MCF 10A (cell line): ENCODE measurements at regions of chr13 and their contacts with region 1.

Region 1: DNA sequence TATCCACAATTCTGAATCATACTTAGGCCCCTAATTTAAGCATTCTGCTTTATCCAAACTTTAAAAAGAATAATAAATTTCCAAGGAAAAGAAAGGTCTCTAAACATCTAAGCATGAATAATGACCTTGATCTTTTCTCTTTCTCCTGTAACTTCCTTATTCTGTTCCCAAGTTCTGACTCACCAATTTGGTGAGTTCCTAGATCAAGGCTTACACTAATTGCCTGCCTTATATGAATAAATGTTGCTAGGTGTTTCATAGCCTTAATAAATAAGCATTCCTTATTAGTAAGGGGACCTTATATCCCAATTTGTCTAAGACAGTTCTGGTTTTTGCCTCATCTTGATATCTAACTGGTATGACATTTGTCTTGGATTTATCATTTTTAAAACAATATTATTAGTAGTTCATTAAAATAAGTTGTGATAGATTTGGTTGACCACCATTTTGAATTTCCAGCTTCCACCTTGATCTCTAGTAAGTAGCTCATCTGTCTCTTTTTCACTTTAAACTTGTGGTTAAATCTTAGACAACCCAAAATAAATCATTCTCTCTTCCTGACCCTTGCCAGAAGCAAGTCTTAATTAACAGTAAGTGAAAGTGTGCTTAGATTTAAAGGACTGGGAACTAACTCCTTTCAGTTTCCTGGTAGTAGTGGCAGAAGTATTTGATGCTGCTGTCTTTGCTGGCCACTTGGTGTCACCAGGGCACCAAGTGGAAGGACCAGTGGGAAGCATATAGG is 121.2 kb upstream of the MLNR start:
- DNase-seq: peak; percentile 38
- H3K4me3 Mint-ChIP-seq: no peak overlapping the region
- H3K27ac Mint-ChIP-seq: peak overlapping the region; percentile 90
- H3K4me1 Mint-ChIP-seq: peaks cover 33% of the 10 kb centered on the region
- H3K27me3 Mint-ChIP-seq: no peaks in the 10 kb centered on the region
- CTCF ChIP-seq: no peak

Region 2: GRCh38 chr13:48879432-48879831 is 219.5 kb before region 1 on chr13:
- CTCF ChIA-PET with region 1: no interaction called
- POLR2A ChIA-PET with region 1: no interaction called
- intact Hi-C with region 1: no loop called
- DNase-seq: no peak
- H3K4me3 Mint-ChIP-seq: no peak overlapping the region
- H3K27ac Mint-ChIP-seq: no peak overlapping the region
- H3K4me1 Mint-ChIP-seq: no peaks in the 10 kb centered on the region
- H3K27me3 Mint-ChIP-seq: no peaks in the 10 kb centered on the region
- CTCF ChIP-seq: no peak

Region 3: DNA sequence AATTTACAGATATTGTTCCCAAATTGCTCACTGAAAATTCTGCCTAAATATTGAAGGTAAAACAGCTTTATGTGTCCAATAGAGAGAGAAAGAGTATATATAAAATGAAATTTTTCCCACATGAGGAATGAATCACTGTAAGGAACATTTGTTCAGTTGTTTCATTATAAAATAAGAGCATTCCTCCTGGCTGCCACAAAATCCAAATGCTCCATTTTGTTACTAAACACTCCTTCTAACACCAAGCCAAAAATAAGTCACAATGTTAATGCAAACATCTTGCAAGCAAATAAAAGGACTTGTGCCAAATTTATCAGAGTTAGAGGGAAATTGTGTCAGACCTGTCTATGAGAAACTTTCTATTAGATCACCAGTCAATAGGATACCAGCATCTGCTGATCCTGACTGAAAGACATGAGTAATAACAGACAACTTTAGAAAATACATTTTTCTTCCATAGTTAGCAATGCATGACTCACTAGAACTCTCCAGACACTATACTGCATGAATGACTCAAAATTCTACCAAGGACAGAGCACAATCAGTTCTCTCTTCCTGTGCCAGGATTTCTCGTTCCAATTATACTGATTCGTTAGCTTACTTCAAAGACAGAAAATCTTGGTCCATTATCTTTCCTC is 206.8 kb before region 1 on chr13:
- CTCF ChIA-PET with region 1: no interaction called
- POLR2A ChIA-PET with region 1: interaction called, 3 read pairs
- intact Hi-C with region 1: loop called (anchors 1 kb)
- DNase-seq: peak; percentile 89
- H3K4me3 Mint-ChIP-seq: no peak overlapping the region
- H3K27ac Mint-ChIP-seq: peak overlapping the region; percentile 86
- H3K4me1 Mint-ChIP-seq: peaks cover 14% of the 10 kb centered on the region
- H3K27me3 Mint-ChIP-seq: no peaks in the 10 kb centered on the region
- CTCF ChIP-seq: no peak

Region 4: DNA sequence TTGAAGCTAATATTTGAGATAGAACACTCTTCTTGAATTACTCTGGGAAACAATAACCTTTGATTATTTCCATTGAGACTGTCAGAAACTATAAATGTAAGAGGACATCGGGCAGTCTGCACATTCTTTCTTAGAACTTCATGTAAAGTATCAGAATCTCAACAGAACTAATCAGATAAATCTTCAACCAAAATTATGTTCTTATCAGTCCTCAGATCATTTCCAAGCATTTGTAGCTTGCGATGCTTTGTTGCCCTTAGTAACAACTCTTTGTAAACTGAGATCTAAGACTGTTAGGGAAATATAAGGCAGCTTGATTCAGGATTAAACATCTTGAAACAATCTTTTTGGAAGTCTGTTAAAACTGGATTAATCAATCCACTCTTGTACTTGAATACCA is 52.9 kb before region 1 on chr13:
- CTCF ChIA-PET with region 1: no interaction called
- POLR2A ChIA-PET with region 1: no interaction called
- intact Hi-C with region 1: no loop called
- DNase-seq: no peak
- H3K4me3 Mint-ChIP-seq: no peak overlapping the region
- H3K27ac Mint-ChIP-seq: no peak overlapping the region
- H3K4me1 Mint-ChIP-seq: peaks cover 6% of the 10 kb centered on the region
- H3K27me3 Mint-ChIP-seq: no peaks in the 10 kb centered on the region
- CTCF ChIP-seq: no peak

Region 5: DNA sequence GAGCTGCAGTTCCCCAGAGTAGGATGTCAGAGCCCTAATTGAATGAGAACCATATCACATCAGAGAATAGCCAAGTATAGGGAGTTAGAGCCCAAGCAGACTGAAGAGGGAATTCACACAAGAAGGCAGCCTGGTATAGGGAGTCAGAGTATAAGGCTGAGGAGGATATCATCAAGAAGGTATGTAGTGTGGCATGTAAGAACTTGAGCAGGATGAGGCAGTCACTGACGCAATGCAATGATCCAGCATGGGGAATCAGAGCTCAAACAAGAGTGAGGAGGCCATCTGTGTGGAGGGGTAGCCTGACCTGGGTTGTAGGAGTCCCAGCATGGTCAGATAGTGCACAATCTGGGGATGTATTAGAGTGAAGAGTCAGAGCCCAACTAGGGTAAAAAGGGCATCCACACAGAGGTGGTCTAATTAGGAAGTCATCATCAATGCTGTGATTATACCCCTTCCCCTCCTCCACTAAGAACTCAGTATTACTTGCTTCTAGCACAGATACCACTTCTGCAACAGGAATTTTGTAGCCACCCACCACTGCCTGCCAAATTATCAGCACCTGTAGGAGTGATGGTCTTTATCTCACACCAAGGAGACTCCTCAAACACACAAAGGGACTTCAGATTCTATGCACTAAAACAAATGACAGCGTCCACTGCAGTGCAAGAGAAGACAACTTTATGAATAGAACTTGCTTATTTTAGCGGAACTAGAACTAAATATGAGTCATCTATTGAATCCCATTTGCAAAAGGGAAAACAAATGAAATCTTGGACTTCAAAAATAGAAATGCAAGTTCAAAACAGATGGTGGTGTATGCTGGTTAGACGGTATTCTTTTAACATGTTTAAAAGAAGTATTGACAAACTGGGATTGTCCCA is 16.0 kb before region 1 on chr13:
- CTCF ChIA-PET with region 1: interaction called, 6 read pairs
- POLR2A ChIA-PET with region 1: interaction called, 20 read pairs
- intact Hi-C with region 1: no loop called
- DNase-seq: peak; percentile 84
- H3K4me3 Mint-ChIP-seq: peak overlapping the region; percentile 13
- H3K27ac Mint-ChIP-seq: peak overlapping the region; percentile 72
- H3K4me1 Mint-ChIP-seq: peaks cover 26% of the 10 kb centered on the region
- H3K27me3 Mint-ChIP-seq: no peaks in the 10 kb centered on the region
- CTCF ChIP-seq: no peak

Region 6: DNA sequence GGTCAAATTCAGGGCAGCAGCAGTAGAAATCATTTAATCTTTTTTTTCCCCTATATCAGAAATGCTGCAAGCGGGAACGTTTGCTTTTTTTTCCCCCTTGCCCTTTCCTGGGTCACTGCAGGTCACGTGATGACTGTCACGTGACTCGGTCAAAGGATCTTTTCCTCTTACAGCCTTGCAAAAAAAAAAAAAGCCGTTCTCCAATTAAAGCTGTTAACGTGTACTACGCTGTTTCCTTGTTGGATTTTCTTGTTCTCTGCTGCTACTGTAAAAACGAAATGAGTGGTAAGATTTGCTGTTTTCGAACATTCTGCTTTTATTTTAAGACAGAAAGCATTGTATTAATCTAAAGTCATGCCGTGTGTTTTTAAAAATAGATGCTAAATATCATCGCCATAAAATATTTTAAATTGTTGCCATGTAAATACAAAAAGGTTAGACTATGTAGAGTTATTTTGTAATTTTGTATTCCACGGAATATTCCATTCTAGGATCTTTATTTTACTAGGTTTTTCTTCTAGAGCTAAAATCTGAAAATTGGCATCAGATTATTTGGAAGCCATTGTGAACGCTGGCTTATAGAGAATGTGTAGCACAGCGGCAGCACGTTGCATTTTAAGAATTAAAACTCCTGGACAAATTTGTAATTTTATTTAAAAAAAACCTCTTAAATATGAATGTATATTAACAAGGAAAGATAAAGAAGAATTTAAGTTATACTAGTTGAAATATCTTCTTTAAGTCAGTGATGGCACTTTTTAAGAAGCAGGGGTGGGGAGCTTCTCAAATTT is 11.4 kb after region 1 on chr13:
- CTCF ChIA-PET with region 1: interaction called, 6 read pairs
- POLR2A ChIA-PET with region 1: interaction called, 57 read pairs
- intact Hi-C with region 1: no loop called
- DNase-seq: peak; percentile 93
- H3K4me3 Mint-ChIP-seq: peak overlapping the region; percentile 79
- H3K27ac Mint-ChIP-seq: peak overlapping the region; percentile 70
- H3K4me1 Mint-ChIP-seq: peaks cover 17% of the 10 kb centered on the region
- H3K27me3 Mint-ChIP-seq: no peaks in the 10 kb centered on the region
- CTCF ChIP-seq: no peak

Region 7: DNA sequence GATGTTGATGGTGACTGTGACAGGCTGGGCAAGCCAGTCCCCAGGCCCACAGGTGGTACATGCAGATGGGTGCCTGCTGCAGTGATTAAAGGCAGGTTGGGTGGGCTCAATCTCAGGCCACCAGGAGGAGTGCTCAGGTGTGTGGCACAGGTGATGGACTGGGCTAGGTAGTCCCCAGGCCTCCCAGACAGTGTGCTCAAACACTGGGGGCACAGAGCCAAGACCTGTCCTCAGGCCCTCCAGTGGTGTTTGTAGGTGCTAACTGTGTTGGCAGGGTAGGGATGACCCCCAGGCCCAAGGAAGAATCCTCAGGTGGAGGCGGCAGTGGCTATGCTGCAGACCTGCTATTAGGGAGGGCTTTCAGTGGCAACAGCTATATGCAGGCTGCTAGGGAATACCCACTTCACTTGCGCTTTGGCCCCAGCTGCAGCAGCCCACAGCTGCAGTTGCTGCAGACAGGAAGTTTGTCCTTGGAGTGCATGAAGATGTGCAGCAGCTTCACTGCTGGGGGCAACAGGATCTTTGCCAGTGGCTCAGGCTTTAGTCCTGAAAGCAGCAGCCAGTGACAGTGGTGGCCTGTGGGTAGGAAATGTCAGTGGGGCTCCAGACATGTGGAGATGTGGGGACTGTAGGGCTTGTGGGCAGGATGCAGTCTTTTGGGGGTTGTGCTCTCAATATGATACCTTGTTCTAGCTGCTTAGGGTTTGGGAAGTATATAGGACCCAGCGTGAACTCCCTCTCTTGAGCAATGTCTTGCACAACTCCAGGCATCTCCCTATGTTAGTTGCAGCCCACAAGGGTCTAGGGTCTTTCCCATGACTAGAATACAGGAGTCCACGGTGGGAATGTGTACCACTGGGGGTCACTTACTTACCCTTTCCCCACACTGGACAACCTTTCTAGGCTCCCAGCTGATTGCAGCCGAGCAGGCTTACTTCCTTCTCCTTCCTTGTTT is 67.1 kb after region 1 on chr13:
- CTCF ChIA-PET with region 1: no interaction called
- POLR2A ChIA-PET with region 1: no interaction called
- intact Hi-C with region 1: no loop called
- DNase-seq: peak; percentile 2
- H3K4me3 Mint-ChIP-seq: no peak overlapping the region
- H3K27ac Mint-ChIP-seq: no peak overlapping the region
- H3K4me1 Mint-ChIP-seq: no peaks in the 10 kb centered on the region
- H3K27me3 Mint-ChIP-seq: no peaks in the 10 kb centered on the region
- CTCF ChIP-seq: no peak

Region 8: GRCh38 chr13:49247643-49248621 is 149.0 kb after region 1 on chr13 and contains the start of gene CDADC1:
- CTCF ChIA-PET with region 1: no interaction called
- POLR2A ChIA-PET with region 1: interaction called, 12 read pairs
- intact Hi-C with region 1: no loop called
- DNase-seq: peak; percentile 95
- H3K4me3 Mint-ChIP-seq: peak within 1 kb of the TSS; percentile 96
- H3K27ac Mint-ChIP-seq: peak within 1 kb of the TSS; percentile 97
- H3K4me1 Mint-ChIP-seq: peaks cover 6% of the 10 kb centered on the region
- H3K27me3 Mint-ChIP-seq: no peaks in the 10 kb centered on the region
- CTCF ChIP-seq: no peak
- total RNA-seq, gene CDADC1: 8.0 and 9.4 TPM in 2 replicates

Region 9: GRCh38 chr13:49278211-49278610 is 179.3 kb after region 1 on chr13:
- CTCF ChIA-PET with region 1: interaction called, 11 read pairs
- POLR2A ChIA-PET with region 1: no interaction called
- intact Hi-C with region 1: no loop called
- DNase-seq: no peak
- H3K4me3 Mint-ChIP-seq: no peak overlapping the region
- H3K27ac Mint-ChIP-seq: no peak overlapping the region
- H3K4me1 Mint-ChIP-seq: no peaks in the 10 kb centered on the region
- H3K27me3 Mint-ChIP-seq: no peaks in the 10 kb centered on the region
- CTCF ChIP-seq: no peak

Region 10: GRCh38 chr13:49606747-49607648 is 508.1 kb after region 1 on chr13:
- CTCF ChIA-PET with region 1: no interaction called
- POLR2A ChIA-PET with region 1: no interaction called
- intact Hi-C with region 1: loop called (anchors 2 kb)
- DNase-seq: peak; percentile 87
- H3K4me3 Mint-ChIP-seq: peak overlapping the region; percentile 55
- H3K27ac Mint-ChIP-seq: no peak overlapping the region
- H3K4me1 Mint-ChIP-seq: no peaks in the 10 kb centered on the region
- H3K27me3 Mint-ChIP-seq: no peaks in the 10 kb centered on the region
- CTCF ChIP-seq: peak; percentile 74